ENCODE measurements at regions of chr10 and their contacts with region 1.

Region 1: DNA sequence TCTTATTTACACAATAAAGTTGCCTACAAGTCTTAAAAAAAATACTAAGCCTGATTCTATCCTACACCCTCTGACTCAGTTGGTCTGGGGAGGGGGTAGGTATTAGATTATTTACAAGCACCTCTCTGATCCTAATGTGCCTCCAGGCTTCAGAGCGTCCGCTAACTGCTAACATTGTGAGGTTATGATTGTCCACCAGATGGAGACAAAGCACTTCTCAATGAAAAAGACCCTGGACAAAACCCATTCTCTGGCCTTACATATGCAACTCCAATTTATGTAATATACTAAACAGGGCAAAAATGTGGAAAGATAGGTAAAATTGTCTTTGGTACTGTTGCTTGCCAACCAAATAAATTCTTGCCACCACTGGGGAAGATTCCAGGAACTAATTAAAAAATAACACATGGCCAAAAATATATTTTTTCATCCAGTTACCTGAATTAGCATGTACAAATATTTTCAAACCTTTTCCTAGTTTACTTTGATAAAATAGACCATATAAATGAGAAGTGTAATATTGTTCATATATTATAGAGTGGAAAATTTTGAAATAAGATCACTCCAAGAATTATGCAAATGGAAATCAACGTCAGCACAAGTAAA is 92.4 kb downstream of the KIF20B start:
- DNase-seq: peak in 1 of 10 donors; percentile 9
- H3K4me3 ChIP-seq: no peak overlapping the region
- H3K27ac ChIP-seq: no peak overlapping the region
- H3K27me3 ChIP-seq: no peaks in the 10 kb centered on the region
- CTCF ChIP-seq: peak; percentile 58 to 98 (median 86)

Region 2: DNA sequence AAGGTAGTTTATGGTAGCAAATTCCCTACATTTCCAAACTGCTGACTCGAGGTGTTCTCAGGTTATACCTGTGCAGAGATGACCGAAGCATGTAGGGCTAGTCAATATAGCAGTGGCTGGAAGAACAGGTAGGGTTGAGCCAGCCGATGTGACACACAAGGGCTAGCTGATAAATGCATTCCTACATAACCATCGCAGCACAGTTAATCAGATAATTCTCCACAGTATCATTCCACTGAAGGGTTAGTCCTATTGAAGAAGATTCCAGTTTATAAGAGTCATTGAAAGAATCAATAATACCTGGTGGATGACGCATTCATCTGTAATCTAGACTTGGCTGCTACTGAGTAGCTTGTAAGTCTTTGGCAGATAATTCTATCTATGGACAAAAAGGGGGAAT is 127.7 kb after region 1 on chr10:
- intact Hi-C with region 1: no loop called
- DNase-seq: no peak
- H3K4me3 ChIP-seq: no peak overlapping the region
- H3K27ac ChIP-seq: no peak overlapping the region
- H3K27me3 ChIP-seq: peaks cover 0 to 4% (median 0%) of the 10 kb centered on the region in 45 donors
- CTCF ChIP-seq: no peak

Region 3: DNA sequence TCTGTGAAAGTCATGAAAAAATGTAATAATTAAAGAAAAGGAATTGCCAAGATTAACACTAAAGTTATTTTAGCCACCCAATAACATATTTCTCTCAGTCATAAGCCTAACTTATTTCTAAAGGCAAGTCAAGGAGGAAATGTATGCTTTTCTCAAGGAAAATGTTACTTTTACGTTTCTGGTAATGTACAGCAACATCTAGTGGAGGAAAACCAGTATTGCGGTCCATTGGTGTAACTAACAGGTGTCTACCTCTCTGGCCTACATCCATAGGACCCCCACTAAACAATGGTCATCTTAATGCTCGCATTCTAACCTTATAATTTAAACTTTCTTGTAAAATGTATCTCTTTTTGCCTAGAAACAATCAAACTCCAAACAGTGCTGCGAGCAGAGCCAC is 345.1 kb after region 1 on chr10:
- intact Hi-C with region 1: loop called (anchors 5 to 10 kb)
- DNase-seq: no peak
- H3K4me3 ChIP-seq: no peak overlapping the region
- H3K27ac ChIP-seq: no peak overlapping the region
- H3K27me3 ChIP-seq: no peaks in the 10 kb centered on the region
- CTCF ChIP-seq: peak in 53 of 56 donors; percentile 16 to 70 (median 48)

Region 4: GRCh38 chr10:90592638-90593302 is 799.0 kb after region 1 on chr10:
- intact Hi-C with region 1: loop called in 1 of 2 experiments (anchors 5 kb)
- DNase-seq: peak in 6 of 10 donors; percentile 12 to 49 (median 34)
- H3K4me3 ChIP-seq: no peak overlapping the region
- H3K27ac ChIP-seq: no peak overlapping the region
- H3K27me3 ChIP-seq: peaks cover 0 to 4% (median 0%) of the 10 kb centered on the region in 45 donors
- CTCF ChIP-seq: peak in 39 of 56 donors; percentile 8 to 59 (median 35)

Region 5: DNA sequence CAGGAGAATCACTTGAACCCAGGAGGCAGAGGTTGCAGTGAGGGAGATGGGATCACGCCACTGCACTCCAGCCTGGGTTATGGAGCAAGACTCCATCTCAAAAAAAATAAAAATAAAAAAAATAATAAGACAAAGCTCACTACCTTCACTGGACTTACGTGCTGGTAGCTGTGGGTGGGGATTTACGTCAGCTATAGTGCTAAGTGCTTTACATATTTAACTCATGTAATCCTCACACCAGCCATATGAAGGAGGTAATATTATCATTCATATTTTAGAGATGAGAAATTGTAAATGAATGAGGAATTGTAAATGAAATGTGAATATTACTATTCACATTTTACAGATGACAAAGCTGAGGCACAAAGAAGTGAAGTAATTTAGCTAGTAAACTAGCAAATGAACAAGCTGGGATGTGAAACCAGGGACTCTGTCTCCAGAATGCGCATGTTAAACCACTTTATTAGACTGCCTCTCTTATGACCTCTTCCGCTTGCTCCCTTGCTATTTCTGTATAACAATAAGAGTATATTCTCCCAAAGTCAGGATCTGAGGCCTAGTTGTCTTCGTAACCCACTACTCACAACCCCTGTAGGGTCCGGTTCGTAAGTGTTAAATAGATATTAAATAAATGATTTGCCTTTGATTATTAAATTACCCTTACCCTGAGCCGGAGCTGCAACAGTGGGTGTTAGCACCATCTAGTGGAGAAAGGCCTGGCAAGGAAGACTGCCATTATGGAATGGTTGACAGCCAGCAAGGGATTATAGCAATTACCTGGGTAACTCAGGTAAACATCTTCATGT is 993.8 kb after region 1 on chr10:
- intact Hi-C with region 1: loop called (anchors 10 kb)
- DNase-seq: no peak
- H3K4me3 ChIP-seq: no peak overlapping the region
- H3K27ac ChIP-seq: no peak overlapping the region
- H3K27me3 ChIP-seq: peaks cover 0 to 6% (median 0%) of the 10 kb centered on the region in 45 donors
- CTCF ChIP-seq: peak in 55 of 56 donors; percentile 43 to 77 (median 64)

Region 6: GRCh38 chr10:90862908-90863514 is 1069.3 kb after region 1 on chr10:
- intact Hi-C with region 1: loop called (anchors 10 kb)
- DNase-seq: no peak
- H3K4me3 ChIP-seq: no peak overlapping the region
- H3K27ac ChIP-seq: no peak overlapping the region
- H3K27me3 ChIP-seq: peaks cover 0 to 13% (median 0%) of the 10 kb centered on the region in 45 donors
- CTCF ChIP-seq: peak; percentile 51 to 85 (median 70)